Ovary (tissue), 10 donors: ENCODE measurements at regions of chr4 and their contacts with region 1.

Region 1: GRCh38 chr4:187504974-187505797 is 490.4 kb upstream of the ZFP42 start:
- DNase-seq: peak in 1 of 5 donors; percentile 20
- H3K4me3 ChIP-seq: no peak overlapping the region
- H3K27ac ChIP-seq: no peak overlapping the region
- H3K4me1 ChIP-seq: peaks cover 3% of the 10 kb centered on the region
- H3K27me3 ChIP-seq: no peaks in the 10 kb centered on the region
- CTCF ChIP-seq: no peak
- EP300 ChIP-seq: no peak
- POLR2A ChIP-seq: no peak

Region 2: DNA sequence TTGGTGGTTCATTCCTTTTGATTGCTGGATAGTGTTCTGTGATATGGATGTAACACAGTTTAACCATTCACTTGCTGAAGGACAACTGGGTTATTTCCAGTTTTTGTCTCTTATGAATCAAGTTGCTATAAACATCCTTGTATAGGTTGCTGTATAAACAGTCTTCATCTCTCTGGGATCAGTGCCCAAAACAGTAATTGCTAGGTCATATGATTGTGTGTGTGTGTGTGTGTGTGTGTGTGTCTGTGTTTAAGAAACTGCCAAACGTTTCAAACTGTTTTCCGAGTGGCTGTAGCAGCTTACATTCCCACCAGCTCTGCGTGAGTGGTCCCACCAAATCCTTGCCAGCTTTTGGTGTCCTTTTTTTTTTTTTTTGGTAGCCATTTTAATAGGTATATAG is 1178.8 kb before region 1 on chr4:
- intact Hi-C with region 1: loop called in 1 of 4 experiments (anchors 5 kb)
- DNase-seq: no peak
- H3K4me3 ChIP-seq: no peak overlapping the region
- H3K27ac ChIP-seq: no peak overlapping the region
- H3K4me1 ChIP-seq: no peaks in the 10 kb centered on the region
- H3K27me3 ChIP-seq: no peaks in the 10 kb centered on the region
- CTCF ChIP-seq: no peak
- EP300 ChIP-seq: no peak
- POLR2A ChIP-seq: no peak

Region 3: DNA sequence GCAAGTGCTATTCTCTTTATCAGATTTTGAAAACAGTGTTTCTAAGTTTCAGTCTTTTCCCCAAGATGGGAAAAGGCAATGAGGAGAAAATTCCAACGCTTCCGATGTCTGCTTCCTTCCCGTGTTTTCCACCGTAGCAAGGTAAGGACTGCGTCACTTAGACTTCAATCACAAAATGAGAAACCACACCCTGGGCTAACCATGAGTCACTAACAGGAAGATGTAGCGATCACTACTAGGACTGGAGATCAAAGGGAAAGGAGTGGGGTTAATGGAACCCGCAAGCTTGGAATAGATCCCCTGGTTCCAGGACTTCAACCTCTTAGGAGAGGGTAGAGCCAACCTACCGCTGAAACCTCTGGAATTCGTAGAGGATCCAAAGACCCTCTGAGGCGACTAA is 239.7 kb after region 1 on chr4:
- intact Hi-C with region 1: no loop called
- DNase-seq: no peak
- H3K4me3 ChIP-seq: no peak overlapping the region
- H3K27ac ChIP-seq: no peak overlapping the region
- H3K4me1 ChIP-seq: no peaks in the 10 kb centered on the region
- H3K27me3 ChIP-seq: no peaks in the 10 kb centered on the region
- CTCF ChIP-seq: no peak
- EP300 ChIP-seq: no peak
- POLR2A ChIP-seq: no peak